ENCODE measurements at regions of chr11 and their contacts with region 1.

Region 1: GRCh38 chr11:7353100-7353499 is 101.4 kb downstream of the SYT9 start:
- DNase-seq: peak; percentile 49
- CTCF ChIP-seq: peak; percentile 50

Region 2: DNA sequence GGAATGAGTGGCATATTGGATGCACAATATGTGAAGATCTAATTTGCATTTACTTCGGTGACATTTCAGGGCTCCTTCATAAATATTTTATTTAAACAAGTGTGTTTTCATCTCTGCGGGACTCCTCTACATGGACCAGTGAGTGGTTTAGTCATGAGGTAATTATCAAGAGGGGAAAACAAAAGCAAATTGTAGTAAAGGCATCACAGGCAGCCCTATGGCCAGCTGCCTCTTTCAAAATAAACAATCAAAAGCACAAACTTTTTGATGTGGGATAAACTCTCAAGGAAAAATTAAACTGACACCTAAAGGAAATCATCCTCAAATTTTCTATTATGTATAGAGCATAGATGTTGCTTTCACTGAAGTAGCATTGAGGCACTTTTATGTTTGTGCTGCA is 95.4 kb before region 1 on chr11:
- in situ Hi-C with region 1: no loop called
- DNase-seq: no peak
- CTCF ChIP-seq: no peak

Region 3: DNA sequence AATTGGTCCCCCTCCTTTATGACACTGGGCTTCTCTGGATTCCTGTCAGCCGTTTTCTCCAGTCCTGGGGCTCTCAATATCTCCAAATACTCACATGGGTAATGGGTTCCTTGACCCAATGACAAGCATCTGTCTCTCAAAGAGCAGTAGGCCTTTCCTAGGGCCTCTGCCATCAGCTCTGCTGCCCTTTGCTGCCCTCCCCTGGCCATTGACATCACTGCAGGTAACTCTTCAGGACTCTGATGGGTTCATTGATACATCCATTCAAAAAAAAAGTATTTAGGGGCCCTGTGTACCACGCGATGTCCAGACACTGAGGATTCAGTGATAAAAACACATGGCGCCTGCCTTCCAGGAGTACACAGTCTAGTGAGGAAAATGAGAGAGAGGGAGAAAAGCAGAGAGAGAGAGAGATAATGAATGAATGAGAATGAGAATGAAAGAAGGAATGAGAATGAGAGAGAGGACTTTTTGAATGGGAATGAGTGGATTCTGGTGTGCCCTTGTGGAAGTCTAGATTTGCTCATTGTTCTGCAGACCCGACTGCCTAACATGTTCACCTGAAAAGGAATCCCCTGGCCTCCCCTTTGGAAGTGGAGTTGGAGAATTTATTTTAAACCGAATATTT is 89.6 kb after region 1 on chr11:
- in situ Hi-C with region 1: loop called (anchors 10 kb)
- DNase-seq: peak; percentile 68
- CTCF ChIP-seq: peak; percentile 80

Region 4: GRCh38 chr11:7714786-7715185 is 361.7 kb after region 1 on chr11:
- in situ Hi-C with region 1: no loop called
- DNase-seq: no peak
- CTCF ChIP-seq: no peak